ENCODE measurements at regions of chr2 and their contacts with region 1.

Region 1: DNA sequence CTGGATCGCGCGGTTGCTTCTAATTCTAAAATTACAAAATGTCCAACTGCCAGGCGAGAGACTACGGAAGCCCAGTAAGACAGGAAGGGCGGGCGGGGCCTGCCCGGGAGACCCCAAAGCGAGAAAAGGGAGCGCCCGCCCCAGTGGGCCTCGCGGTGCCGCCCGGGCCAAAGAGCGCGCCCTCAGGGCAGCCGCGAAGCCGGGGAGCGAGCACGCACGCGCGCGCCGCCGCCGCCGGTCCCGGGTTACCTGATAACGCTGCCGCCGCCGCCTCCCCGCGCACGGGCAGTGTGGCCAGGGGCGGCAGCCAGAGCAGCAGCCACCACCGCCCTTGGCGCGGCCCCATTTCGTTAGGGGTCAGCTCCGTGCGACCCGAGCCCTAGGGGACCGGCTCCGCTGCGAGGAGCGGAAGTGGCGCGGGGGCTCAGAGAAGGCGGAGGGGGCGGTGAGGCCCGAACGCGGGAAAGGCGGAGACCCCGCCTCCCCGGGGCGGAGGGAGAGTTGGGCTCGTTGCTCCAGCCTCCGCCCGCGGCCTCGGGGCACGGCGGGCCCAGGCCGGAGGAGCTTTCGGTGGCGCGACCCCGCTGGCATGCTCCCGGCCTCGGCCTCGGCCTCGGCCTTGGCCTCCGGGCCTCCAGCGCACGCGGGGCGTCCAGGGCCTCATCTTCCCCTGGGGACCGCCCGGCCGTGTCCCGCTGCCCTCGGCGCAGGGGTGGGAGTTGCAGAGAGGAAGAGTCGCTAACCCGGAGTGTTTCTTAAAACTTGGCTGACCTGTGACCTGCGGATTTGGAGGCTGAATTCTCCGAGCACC is at the start of gene NEMP2:
- DNase-seq: peak; percentile 95
- ATAC-seq: peak; percentile 84
- H3K4me3 Mint-ChIP-seq: peak within 1 kb of the TSS; percentile 94
- H3K27ac Mint-ChIP-seq: peak within 1 kb of the TSS; percentile 99
- H3K4me1 Mint-ChIP-seq: peaks cover 33% of the 10 kb centered on the region
- H3K27me3 Mint-ChIP-seq: no peaks in the 10 kb centered on the region
- total RNA-seq, gene NEMP2: 16.2 to 23.1 TPM

Region 2: GRCh38 chr2:190343500-190344275 is 190.8 kb before region 1 on chr2 and contains the start of gene INPP1:
- POLR2A ChIA-PET with region 1: no interaction called
- DNase-seq: peak; percentile 66
- ATAC-seq: peak; percentile 70
- H3K4me3 Mint-ChIP-seq: peak within 1 kb of the TSS; percentile 84
- H3K27ac Mint-ChIP-seq: peak within 1 kb of the TSS; percentile 68
- H3K4me1 Mint-ChIP-seq: peaks cover 15% of the 10 kb centered on the region
- H3K27me3 Mint-ChIP-seq: peaks cover 6% of the 10 kb centered on the region
- total RNA-seq, gene INPP1: 8.7 to 9.7 TPM

Region 3: GRCh38 chr2:190408538-190409271 is 125.8 kb before region 1 on chr2:
- POLR2A ChIA-PET with region 1: interaction called, 46 read pairs
- DNase-seq: peak; percentile 79
- ATAC-seq: peak; percentile 51
- H3K4me3 Mint-ChIP-seq: peak overlapping the region; percentile 91
- H3K27ac Mint-ChIP-seq: peak overlapping the region; percentile 95
- H3K4me1 Mint-ChIP-seq: peaks cover 44% of the 10 kb centered on the region
- H3K27me3 Mint-ChIP-seq: no peaks in the 10 kb centered on the region

Region 4: GRCh38 chr2:190415794-190416775 is 118.4 kb before region 1 on chr2:
- POLR2A ChIA-PET with region 1: interaction called, 46 read pairs
- DNase-seq: no peak
- ATAC-seq: peak; percentile 63
- H3K4me3 Mint-ChIP-seq: peak overlapping the region; percentile 83
- H3K27ac Mint-ChIP-seq: peak overlapping the region; percentile 97
- H3K4me1 Mint-ChIP-seq: peaks cover 43% of the 10 kb centered on the region
- H3K27me3 Mint-ChIP-seq: no peaks in the 10 kb centered on the region

Region 5: GRCh38 chr2:190515687-190516086 is 18.8 kb before region 1 on chr2:
- POLR2A ChIA-PET with region 1: interaction called, 20 read pairs
- DNase-seq: no peak
- ATAC-seq: no peak
- H3K4me3 Mint-ChIP-seq: no peak overlapping the region
- H3K27ac Mint-ChIP-seq: no peak overlapping the region
- H3K4me1 Mint-ChIP-seq: peaks cover 25% of the 10 kb centered on the region
- H3K27me3 Mint-ChIP-seq: no peaks in the 10 kb centered on the region

Region 6: GRCh38 chr2:190718652-190719526 is 184.4 kb after region 1 on chr2:
- POLR2A ChIA-PET with region 1: no interaction called
- DNase-seq: no peak
- ATAC-seq: no peak
- H3K4me3 Mint-ChIP-seq: no peak overlapping the region
- H3K27ac Mint-ChIP-seq: no peak overlapping the region
- H3K4me1 Mint-ChIP-seq: peaks cover 16% of the 10 kb centered on the region
- H3K27me3 Mint-ChIP-seq: no peaks in the 10 kb centered on the region